GM13976 (cell line): ENCODE measurements at regions of chr12 and their contacts with region 1.

Region 1: GRCh38 chr12:126069549-126070165 is 1004.4 kb downstream of the AACS start:
- DNase-seq: peak; percentile 17
- CTCF ChIP-seq: no peak

Region 2: DNA sequence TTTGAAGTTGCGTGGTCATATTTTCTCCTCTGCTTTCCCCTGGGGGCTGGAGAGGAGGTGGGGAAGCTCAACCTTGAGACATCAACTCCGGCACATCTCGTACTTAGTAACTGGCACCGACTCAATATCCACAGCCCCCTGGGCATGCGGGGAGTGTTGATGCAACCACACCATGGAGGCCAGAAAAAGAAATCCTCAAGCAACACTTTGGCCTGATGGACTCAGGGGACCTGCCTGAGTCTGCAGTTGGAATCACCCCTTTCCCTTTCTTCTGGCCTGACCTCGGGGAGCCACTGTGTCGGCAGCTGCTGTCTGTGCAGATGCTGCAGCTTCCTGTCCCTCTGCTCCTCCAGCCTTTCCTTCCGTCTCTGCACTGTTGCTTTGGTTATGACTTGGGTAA is 1015.8 kb before region 1 on chr12:
- in situ Hi-C with region 1: no loop called
- DNase-seq: no peak
- CTCF ChIP-seq: no peak

Region 3: DNA sequence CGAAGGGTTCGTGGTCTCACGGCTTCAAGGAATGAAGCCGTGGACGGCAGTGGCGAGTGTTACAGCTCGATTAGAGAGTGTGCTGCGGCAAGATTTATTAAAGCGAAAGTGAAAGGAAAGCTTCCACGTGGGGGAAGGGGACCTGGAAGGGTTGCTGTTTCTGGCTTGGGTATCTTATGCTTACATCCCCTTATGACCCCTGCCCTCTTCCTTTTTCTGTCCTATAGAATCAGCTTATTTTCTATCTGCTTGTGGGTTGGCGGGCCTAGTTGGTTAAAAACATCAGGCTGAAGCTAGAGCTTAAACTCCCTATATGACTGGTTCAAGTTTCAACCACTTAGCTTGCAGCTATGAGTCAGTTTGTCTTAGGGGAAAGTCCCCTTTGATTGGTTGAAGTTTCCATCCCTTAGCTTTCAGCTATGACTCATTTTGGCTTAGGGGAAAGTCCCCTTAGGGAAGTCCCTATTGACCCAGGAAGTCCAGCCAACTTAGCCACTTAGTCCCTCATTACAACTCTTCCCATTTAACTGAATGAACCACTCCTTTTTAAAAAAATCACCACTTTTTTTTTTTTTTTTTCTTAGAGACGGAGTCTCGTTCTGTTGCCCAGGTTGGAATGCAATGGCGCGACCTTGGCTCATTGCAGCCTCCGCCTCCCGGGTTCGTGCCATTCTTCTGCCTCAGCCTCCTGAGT is 702.7 kb after region 1 on chr12:
- in situ Hi-C with region 1: no loop called
- DNase-seq: peak; percentile 55
- CTCF ChIP-seq: no peak

Region 4: DNA sequence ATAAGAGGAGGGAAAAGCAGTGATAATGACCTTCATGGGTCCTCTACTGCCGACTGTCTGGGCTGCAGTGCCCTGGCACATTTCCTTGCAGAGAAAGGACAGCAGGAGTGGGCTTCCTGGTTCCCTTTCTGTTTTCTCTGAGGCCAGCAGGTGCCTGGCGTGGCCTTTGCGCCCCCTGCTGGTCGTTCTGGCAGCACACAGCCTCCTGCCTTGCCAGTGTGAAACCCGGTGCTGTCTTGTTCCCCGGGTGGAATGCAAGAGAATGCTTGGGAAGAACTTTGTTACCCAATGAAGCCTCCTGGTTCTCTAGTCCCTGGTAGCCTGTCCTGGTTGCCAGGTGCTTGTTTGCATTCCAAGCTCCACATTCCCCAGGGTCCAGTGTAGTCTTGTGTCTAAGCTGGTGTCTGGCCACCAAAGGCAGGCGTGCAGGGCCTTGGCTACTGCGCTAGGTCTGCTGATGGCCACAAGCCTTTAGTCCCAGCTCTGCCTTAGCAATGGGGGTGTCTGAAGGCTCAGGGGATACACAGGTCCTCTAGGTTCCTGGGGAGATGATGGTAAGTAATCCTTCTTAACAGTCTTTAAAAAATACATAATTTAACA is 804.9 kb after region 1 on chr12:
- in situ Hi-C with region 1: loop called (anchors 25 kb)
- DNase-seq: peak; percentile 73
- CTCF ChIP-seq: peak; percentile 92